Heart right ventricle (tissue), 16 donors: ENCODE measurements at regions of chr13 and their contacts with region 1.

Region 1: DNA sequence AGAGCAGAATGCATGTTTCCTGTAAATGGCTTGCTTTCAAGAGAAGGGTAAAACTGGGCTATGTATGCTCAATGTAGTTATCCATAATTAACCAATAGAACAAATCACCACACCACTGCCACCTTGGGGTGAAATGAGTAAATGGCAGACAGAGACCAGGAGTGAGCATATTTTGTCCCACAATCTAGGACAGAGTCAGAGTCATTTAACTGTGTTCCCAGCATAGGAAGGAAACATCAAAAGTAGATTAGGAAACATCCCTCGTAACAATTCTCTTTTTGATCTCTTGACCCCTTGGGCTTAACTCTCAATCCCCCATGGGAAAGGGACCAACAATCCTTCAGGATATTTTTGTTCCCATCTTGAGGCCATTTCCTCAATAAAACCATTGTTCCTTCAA is 224.8 kb downstream of the NHLRC3 start:
- DNase-seq: peak in 1 of 2 donors; percentile 69
- ATAC-seq: peak; percentile 84 to 94 (median 88)
- H3K4me3 ChIP-seq: no peak overlapping the region
- H3K27ac ChIP-seq: peak overlapping the region in 5 of 10 donors; percentile 16 to 87 (median 67)
- H3K4me1 ChIP-seq: peaks cover 0 to 60% (median 33%) of the 10 kb centered on the region in 9 donors
- H3K27me3 ChIP-seq: no peaks in the 10 kb centered on the region
- CTCF ChIP-seq: peak; percentile 59 to 83 (median 71)

Region 2: DNA sequence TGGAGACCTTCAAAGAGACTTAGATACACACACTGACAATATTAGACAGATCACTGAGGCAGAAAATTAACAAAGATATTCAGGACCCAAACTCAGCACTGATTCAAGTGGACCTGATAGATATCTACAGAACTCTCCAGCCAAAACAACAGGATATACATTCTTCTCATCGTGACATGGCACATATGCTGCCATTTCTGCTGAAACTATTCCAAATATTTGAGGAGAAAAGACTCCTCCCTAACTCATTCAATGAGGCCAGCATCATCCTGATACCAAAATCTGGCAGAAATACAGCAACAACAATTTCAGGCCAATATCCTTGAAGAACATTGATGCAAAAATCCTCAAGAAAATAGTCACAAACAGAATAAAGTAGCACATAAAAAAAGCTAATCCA is 1446.8 kb before region 1 on chr13:
- intact Hi-C with region 1: no loop called
- DNase-seq: no peak
- ATAC-seq: no peak
- H3K4me3 ChIP-seq: no peak overlapping the region
- H3K27ac ChIP-seq: no peak overlapping the region
- H3K4me1 ChIP-seq: no peaks in the 10 kb centered on the region
- H3K27me3 ChIP-seq: no peaks in the 10 kb centered on the region
- CTCF ChIP-seq: no peak

Region 3: GRCh38 chr13:39072842-39073241 is 190.2 kb before region 1 on chr13:
- intact Hi-C with region 1: no loop called
- DNase-seq: no peak
- ATAC-seq: no peak
- H3K4me3 ChIP-seq: no peak overlapping the region
- H3K27ac ChIP-seq: no peak overlapping the region
- H3K4me1 ChIP-seq: no peaks in the 10 kb centered on the region
- H3K27me3 ChIP-seq: peaks cover 0 to 11% (median 8%) of the 10 kb centered on the region in 7 donors
- CTCF ChIP-seq: no peak

Region 4: GRCh38 chr13:39144941-39145533 is 118.0 kb before region 1 on chr13:
- intact Hi-C with region 1: loop called (anchors 1 to 10 kb)
- DNase-seq: peak; percentile 15 to 72
- ATAC-seq: peak; percentile 50 to 88 (median 78)
- H3K4me3 ChIP-seq: peak overlapping the region in 5 of 10 donors; percentile 14 to 42 (median 27)
- H3K27ac ChIP-seq: peak overlapping the region in 3 of 10 donors; percentile 52 to 59 (median 56)
- H3K4me1 ChIP-seq: peaks cover 0 to 27% (median 11%) of the 10 kb centered on the region in 9 donors
- H3K27me3 ChIP-seq: no peaks in the 10 kb centered on the region
- CTCF ChIP-seq: peak; percentile 71 to 92 (median 80)

Region 5: DNA sequence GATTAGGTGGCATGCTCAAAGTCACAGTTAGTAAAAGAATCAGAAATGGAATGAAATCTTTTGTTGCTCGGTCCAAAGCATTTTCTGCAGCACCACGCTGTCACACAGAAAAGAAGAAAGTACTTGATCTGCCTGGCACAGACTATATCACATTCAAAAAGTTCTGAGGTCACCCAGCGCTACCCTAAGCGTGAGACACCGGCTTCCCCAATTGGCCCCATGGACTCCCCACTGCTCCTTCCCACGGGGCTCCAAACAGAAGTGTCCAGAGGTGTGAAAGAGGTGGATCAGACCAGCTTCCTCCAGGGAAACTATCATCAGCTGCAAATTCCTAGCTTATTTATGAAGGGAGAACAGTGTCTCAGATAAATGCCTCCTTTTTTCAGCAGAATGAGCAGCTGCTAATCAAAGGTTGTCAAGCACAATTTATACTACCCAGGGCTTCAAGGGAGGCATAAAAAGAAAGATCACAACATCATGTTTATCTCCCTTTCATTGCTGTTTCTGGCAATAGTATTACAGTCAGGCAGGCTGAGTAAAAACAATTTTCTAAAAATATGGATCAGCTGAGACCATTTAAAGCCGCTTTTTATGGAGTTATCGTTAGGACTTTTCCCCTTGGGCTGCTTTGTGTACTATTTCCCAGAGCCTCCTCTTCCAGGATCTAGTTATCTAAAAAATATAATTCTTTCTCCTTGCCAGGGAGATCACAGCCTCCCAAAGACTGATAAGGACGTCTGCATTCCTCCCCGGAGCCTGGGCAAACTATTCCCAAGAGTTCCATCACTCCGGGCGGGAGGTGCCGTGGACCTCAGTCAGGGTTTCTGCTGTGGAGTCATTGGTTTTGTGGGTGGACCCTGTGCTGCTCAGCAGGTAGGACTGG is 132.0 kb after region 1 on chr13:
- intact Hi-C with region 1: loop called in 1 of 10 experiments (anchors 10 kb)
- DNase-seq: no peak
- ATAC-seq: peak; percentile 40 to 73 (median 45)
- H3K4me3 ChIP-seq: peak overlapping the region in 5 of 10 donors; percentile 7 to 15 (median 8)
- H3K27ac ChIP-seq: peak overlapping the region in 9 of 10 donors; percentile 6 to 73 (median 52)
- H3K4me1 ChIP-seq: peaks cover 0 to 74% (median 46%) of the 10 kb centered on the region in 9 donors
- H3K27me3 ChIP-seq: no peaks in the 10 kb centered on the region
- CTCF ChIP-seq: no peak

Region 6: DNA sequence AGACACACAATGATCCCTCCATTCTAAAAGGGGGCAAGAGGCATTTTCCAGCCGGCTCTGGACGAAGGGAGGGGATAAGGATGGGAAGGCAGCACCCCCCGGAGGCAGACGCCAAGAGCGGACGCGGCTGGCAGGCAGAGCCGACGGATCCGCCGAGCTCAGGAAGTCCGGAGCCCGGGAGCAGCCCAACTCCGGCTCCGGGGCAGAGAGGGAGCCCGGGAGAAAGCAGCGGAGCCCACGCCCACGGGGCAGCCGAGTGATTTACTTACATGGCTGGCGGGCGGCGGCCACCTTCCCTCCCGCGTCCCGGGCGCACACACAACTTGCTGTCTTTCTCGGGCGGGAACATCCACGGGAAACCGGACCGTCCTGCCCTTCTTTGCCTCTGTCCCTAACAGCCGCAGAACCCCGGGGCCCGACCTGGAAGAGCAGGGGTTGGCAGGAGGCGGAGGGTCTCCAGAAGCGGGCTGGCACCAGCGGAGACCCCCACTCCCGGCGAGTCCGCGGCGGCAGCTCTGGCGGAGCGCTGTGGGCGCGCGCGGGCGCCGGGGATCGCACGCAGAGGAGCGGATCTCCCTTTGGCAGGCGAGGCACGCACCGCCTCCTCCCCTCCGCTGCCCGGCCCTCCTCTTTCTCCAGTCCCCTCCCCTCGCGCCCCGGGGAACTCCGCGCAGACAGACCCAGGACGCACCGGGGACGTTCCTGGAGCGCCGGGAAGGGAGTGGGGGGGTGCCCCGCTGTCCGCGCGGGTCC is 339.8 kb after region 1 on chr13 and contains the start of gene LHFPL6:
- intact Hi-C with region 1: loop called in 1 of 10 experiments (anchors 5 kb)
- DNase-seq: peak; percentile 88 to 90
- ATAC-seq: peak; percentile 93 to 98 (median 94)
- H3K4me3 ChIP-seq: peak within 1 kb of the TSS; percentile 69 to 96 (median 90)
- H3K27ac ChIP-seq: peak within 1 kb of the TSS; percentile 87 to 98 (median 96)
- H3K4me1 ChIP-seq: peaks cover 0 to 50% (median 21%) of the 10 kb centered on the region in 9 donors
- H3K27me3 ChIP-seq: peaks cover 0 to 33% (median 0%) of the 10 kb centered on the region in 7 donors
- CTCF ChIP-seq: peak in 7 of 9 donors; percentile 39 to 69 (median 45)
- total RNA-seq, gene LHFPL6: 41.5 to 65.8 (median 58.2) TPM

Region 7: DNA sequence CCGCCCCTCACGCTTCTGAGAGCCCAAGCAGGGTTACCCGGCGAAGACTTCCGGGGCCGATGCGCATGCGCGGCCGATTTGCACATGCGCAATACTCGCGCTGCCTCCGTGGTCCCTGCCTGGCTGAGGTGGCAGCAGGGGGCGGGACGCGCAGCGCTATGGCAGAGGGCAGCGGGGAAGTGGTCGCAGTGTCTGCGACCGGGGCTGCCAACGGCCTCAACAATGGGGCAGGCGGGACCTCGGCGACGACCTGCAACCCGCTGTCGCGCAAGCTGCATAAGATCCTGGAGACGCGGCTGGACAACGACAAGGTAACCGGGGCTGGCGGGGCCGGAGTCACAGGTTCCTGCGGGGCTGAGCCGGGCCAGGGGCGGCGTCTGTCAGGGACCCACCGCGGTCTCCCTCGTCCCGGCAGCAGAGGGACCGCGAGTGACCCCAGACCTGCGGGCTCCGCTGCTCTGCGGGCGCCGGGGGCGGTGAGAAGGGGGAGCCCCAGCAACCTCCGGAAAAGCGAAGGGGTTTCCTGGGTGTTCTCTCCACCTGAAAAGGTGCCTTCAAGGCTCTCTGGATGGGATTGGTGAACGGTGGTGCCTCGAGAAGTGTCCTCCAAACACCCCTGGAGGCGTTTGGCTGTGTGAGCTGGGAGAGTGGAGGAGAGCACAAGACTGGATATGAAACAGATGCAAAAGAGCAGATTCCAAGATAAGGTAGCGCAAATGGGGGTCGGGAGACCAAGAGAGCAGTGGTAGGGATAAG is 392.7 kb after region 1 on chr13 and contains the start of gene COG6:
- intact Hi-C with region 1: no loop called
- DNase-seq: peak; percentile 89 to 95
- ATAC-seq: peak; percentile 97 to 99 (median 98)
- H3K4me3 ChIP-seq: peak within 1 kb of the TSS; percentile 72 to 96 (median 88)
- H3K27ac ChIP-seq: peak within 1 kb of the TSS in 9 of 10 donors; percentile 62 to 86 (median 78)
- H3K4me1 ChIP-seq: peaks cover 0 to 22% (median 14%) of the 10 kb centered on the region in 9 donors
- H3K27me3 ChIP-seq: no peaks in the 10 kb centered on the region
- CTCF ChIP-seq: peak in 4 of 9 donors; percentile 17 to 51 (median 28)
- total RNA-seq, gene COG6: 24.1 to 48.3 (median 30.3) TPM